ENCODE measurements at regions of chr1 and their contacts with region 1.

Region 1: GRCh38 chr1:35769759-35770446 is at the start of gene CLSPN:
- DNase-seq: peak; percentile 98
- ATAC-seq: peak; percentile 98
- H3K4me3 Mint-ChIP-seq: peak within 1 kb of the TSS; percentile 91
- H3K27ac Mint-ChIP-seq: peak within 1 kb of the TSS; percentile 97
- H3K4me1 Mint-ChIP-seq: peaks cover 6% of the 10 kb centered on the region
- H3K27me3 Mint-ChIP-seq: no peaks in the 10 kb centered on the region
- total RNA-seq, gene CLSPN: 45.7 to 57.8 TPM

Region 2: DNA sequence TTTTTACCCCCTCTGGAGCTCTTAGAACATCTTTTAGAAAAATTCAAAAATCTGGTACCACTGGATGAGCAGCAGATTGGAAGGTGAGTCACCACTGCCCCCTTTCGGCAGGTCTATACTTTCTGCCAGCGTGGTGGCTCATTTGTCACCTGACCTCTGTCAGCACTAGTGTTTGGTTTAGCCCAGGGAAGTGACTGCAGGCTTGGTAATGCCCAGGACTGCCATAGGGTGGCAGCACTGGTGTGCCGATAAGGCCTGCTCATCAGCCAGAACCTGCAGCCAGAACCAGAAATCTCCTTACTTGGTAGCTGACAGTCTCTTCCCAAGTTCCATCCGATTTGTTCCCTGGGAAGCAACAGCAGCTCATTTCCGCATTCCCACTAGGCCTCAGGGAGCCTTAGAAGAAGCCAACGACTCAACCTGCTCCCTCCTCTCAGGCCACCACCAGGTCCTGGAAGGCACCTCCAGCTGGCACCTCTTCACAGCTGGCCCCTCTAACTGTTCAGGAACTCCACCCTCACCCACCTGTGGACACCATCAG is 917.2 kb before region 1 on chr1:
- CTCF ChIA-PET with region 1: no interaction called
- POLR2A ChIA-PET with region 1: no interaction called
- intact Hi-C with region 1: loop called in 1 of 2 experiments (anchors 5 kb)
- DNase-seq: peak; percentile 95
- ATAC-seq: peak; percentile 100
- H3K4me3 Mint-ChIP-seq: no peak overlapping the region
- H3K27ac Mint-ChIP-seq: peak overlapping the region; percentile 34
- H3K4me1 Mint-ChIP-seq: peaks cover 17% of the 10 kb centered on the region
- H3K27me3 Mint-ChIP-seq: no peaks in the 10 kb centered on the region

Region 3: DNA sequence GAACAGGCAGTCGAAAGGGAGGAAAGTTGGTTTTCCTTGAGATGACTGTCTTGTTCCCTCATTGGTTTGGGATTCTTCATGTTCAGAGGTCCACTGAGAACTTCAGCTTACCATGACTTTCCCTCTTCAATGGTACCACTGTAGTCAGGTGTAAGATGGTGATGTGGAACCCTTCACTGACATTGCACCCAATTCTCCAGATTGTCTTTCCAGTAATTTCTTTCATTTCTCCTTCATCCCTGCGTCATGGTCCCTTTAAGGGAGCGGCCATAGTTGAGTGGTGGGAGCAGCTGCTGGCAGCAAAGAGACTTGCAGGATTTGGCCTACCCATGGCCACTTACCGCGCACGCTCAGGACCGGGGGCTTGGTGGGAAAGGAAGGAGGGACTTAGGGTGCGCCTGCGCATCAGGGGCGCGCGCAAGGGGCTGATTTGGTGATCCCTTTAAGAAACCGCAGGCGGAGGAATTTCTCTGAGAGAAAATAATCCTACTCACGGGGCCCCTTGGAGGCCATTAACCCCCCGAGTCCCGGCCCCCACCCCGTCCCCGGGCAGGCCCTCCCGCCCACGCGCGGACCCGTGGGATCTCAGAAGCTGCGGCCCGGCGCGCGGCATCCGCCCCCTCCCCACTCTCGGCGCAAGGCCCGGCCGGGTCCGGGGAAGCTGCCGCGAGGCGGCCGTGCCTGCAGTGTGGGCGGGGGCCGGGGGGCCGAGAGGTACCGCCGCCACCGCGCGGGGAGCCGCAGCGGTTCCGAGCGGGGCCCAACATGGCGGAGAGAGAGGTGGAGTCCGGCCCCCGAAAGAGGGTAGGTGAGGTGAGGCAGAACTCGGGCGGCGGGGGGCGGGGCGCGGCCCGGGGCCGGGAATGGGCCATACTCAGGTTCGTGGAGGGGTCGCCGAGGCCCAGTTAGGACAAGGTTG is 501.4 kb before region 1 on chr1 and contains the start of gene ZMYM4:
- CTCF ChIA-PET with region 1: no interaction called
- POLR2A ChIA-PET with region 1: no interaction called
- intact Hi-C with region 1: loop called in 1 of 2 experiments (anchors 1 kb)
- DNase-seq: peak; percentile 94
- ATAC-seq: peak; percentile 98
- H3K4me3 Mint-ChIP-seq: peak within 1 kb of the TSS; percentile 76
- H3K27ac Mint-ChIP-seq: peak within 1 kb of the TSS; percentile 83
- H3K4me1 Mint-ChIP-seq: peaks cover 30% of the 10 kb centered on the region
- H3K27me3 Mint-ChIP-seq: no peaks in the 10 kb centered on the region
- total RNA-seq, gene ZMYM4: 27.8 to 31.6 TPM

Region 4: DNA sequence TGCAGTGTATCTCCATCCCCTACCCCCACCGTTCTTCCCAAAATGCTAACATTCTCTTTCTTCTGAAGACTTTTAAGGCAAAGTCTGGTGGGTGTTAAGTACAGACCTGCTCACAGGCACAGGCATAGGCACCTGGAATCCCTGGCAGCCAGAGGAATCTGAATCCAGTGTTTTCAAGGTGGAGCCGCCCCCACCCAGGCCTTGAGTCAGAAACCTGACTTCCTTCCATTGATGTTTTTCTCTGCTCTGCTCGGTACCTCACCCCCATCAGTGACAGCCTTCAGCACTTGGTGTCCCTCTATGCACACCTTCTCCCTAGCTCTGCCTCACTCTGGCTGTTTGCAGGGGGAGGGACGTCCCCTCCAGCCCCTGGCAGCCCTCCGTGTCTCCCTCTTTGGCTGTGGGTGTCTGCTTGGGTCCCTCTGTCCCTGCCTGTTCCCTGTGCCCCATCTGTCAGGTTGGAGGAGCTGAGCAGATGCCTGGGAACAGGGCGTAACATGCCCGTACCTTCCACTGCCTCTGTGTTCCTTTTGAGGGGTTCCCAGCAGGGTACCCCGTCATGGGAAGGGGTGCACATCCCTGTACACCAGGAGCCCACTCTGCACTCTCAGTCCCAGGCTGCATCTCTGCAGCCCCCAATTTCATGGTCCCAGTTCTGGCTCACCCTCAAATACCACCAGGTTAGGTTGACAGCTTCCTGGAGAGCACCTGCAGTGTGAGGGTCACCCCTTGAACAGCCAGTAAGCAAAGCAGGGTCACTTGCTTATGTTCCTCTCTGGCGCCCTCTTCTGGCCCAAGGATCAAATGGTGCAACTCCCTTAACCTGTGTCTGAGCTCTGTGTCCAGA is 205.6 kb before region 1 on chr1:
- CTCF ChIA-PET with region 1: interaction called, 13 read pairs
- POLR2A ChIA-PET with region 1: interaction called, 5 read pairs
- intact Hi-C with region 1: loop called (anchors 1 kb)
- DNase-seq: peak; percentile 91
- ATAC-seq: peak; percentile 87
- H3K4me3 Mint-ChIP-seq: no peak overlapping the region
- H3K27ac Mint-ChIP-seq: no peak overlapping the region
- H3K4me1 Mint-ChIP-seq: peaks cover 28% of the 10 kb centered on the region
- H3K27me3 Mint-ChIP-seq: no peaks in the 10 kb centered on the region

Region 5: DNA sequence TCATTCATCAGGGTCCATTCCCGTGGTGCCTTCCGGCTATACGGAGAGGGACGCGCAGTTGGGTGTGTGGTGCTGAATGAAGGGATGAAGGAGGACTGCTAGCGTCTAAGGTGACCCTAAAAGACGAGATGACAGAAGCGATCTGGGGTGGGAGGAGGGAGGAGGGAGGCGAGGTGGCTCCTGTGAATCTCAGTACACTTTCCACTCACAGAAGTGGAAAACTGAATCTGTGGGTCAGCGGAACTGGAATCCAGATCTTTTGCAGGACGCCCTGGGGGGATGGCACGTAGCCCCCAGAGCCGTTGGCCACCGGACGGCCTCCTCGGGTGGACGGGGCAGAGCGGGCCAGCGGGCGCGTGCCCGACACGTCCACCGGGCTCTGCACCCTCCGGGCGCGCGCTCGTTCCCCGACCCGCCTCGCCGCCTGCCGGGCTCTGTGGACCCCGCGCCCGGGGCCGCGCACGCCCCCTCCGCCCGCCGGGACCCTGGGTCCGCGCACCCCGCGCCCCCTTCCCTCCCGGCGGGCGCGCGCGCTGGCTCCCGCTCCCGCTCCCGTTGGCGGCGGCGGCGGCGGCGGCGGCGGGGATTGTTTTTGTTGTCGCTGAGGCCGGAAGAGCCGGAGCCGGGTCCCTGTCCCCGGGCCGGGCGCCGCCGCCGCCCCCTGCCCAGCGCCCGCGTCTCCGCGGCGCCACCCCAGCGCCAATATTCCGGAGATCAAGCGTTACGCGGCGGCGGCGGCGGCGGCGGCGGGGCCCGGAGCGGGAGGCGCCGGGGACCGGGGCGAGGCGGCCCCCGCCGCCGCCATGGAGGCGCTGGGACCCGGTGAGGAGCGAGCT is 37.9 kb after region 1 on chr1 and contains the start of gene AGO4:
- CTCF ChIA-PET with region 1: interaction called, 3 read pairs
- POLR2A ChIA-PET with region 1: interaction called, 9 read pairs
- intact Hi-C with region 1: loop called in 1 of 2 experiments (anchors 5 kb)
- DNase-seq: peak; percentile 56
- ATAC-seq: peak; percentile 31
- H3K4me3 Mint-ChIP-seq: peak within 1 kb of the TSS; percentile 82
- H3K27ac Mint-ChIP-seq: peak within 1 kb of the TSS; percentile 87
- H3K4me1 Mint-ChIP-seq: peaks cover 31% of the 10 kb centered on the region
- H3K27me3 Mint-ChIP-seq: no peaks in the 10 kb centered on the region
- total RNA-seq, gene AGO4: 4.1 to 10.1 TPM

Region 6: DNA sequence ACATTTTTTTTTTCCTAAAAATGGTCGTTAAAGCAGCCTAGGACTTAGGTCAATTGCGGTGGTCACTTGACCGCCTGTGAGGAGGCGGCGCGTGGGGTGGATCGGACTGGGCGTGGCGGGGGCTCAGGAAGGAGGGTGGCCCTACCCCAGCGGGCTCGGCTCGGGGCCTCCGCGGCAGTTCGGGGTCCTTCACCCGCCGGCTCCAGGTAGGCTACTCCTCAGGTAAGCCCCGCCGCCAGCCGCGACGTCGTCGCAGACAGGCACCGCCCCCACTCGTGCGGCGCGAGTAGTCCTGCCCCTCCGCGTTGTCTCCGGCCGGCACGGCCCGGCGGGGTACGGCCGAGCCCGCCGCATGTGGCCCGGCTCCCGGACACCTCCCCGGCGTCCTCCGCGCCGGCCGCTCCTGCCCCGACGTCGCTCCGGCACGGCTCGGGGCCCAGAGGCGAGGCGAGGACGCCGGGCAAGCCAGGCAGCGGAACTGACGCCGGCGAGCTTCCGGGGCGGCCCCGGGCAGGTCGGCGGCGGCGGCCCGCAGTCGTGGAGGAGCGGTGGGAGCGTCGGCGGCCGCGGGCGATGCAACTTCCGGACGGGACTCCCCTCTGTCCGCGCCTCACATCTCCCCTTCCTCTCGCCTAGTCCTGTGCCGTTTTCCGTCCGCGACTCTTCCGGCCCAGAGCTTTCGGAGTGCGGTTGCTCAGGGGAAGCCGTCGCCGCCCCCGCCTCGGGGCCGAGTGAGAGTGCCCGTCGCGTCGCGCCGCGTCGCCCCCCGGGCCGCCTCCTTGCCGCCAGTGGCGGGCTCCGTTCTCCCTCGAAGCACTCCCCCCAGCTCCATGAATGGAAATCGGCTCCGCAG is 160.9 kb after region 1 on chr1 and contains the start of gene AGO3:
- CTCF ChIA-PET with region 1: no interaction called
- POLR2A ChIA-PET with region 1: interaction called, 3 read pairs
- intact Hi-C with region 1: loop called in 1 of 2 experiments (anchors 1 kb)
- DNase-seq: peak; percentile 95
- ATAC-seq: peak; percentile 95
- H3K4me3 Mint-ChIP-seq: peak within 1 kb of the TSS; percentile 92
- H3K27ac Mint-ChIP-seq: peak within 1 kb of the TSS; percentile 94
- H3K4me1 Mint-ChIP-seq: peaks cover 37% of the 10 kb centered on the region
- H3K27me3 Mint-ChIP-seq: no peaks in the 10 kb centered on the region
- total RNA-seq, gene AGO3: 23.3 to 33.8 TPM

Measured in activated CD4-positive, alpha-beta T cell treated with anti-CD3 and anti-CD28 coated beads for 36 hours (primary cell).